Ascending aorta (tissue), 2 donors: ENCODE measurements at regions of chr12 and their contacts with region 1.

Region 1: DNA sequence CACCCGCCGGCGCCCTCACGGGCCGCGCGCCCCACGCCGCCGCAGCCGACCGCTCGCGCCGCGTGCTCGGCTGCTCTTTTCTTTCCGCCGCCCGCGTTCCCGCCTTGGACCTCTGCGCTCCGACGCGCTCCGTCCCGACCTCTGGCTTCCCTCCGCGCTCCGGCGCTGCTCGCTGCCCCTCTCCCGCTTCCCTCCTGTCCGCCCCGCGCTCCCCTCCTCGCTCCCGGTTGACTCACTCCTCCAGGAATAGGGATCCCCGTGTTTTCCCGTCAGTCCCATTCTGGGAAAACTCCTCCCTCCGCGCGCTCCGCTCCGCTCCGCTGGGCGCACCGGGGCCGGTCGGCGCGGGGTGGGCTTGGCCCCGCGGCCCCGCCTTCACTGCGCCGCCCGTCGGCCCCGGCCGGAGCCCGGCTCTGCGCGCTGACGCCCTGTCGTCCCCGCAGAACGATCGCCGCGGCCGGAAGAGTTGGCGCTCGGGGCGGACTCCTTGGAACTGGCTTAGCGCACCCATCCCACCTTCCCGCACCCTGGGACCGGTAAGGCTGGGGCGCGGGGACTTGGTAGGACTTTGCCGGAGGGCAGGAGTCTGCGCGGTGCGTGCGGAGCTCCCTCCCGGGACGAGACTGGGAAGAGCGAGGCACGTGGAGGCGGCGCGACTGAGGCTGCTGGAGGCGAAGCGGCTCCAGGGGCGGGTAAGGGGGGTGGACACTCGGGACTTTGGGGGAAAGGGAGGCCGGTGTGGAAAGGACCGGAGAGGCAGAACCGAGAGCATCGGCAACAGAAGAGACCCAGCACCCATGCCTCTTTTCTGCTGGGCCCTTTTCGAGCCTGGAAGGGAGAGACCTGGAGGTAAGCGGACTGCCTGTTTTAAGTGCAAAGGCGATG is 550 bp downstream of the TEAD4 start:
- DNase-seq: peak in 1 of 2 donors; percentile 83
- H3K4me3 ChIP-seq: peak overlapping the region; percentile 71 to 75
- H3K27ac ChIP-seq: peak overlapping the region; percentile 93 to 95
- H3K4me1 ChIP-seq: peaks cover 5 to 16% of the 10 kb centered on the region in 2 donors
- H3K27me3 ChIP-seq: no peaks in the 10 kb centered on the region
- CTCF ChIP-seq: no peak

Region 2: DNA sequence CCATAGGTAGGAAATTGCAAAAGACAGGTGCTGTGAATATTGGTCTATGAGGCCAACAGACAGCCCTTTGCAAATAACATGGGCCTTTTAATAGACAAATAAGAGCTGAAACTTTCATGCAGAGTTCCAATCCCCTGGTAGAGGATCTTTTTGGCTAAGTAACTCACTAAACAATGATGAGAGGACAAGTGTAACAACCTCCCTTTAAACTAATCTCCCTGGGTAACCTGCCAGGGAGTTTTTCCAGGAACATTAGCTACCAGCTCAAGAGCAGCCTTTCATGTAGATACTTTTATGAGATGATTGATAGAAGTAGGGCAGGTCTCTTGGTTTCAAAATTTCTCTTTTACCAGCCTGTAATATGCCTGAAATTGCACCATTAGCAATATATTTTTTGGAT is 920.7 kb before region 1 on chr12:
- intact Hi-C with region 1: no loop called
- DNase-seq: no peak
- H3K4me3 ChIP-seq: no peak overlapping the region
- H3K27ac ChIP-seq: no peak overlapping the region
- H3K4me1 ChIP-seq: peaks cover 3 to 11% of the 10 kb centered on the region in 2 donors
- H3K27me3 ChIP-seq: no peaks in the 10 kb centered on the region
- CTCF ChIP-seq: no peak

Region 3: DNA sequence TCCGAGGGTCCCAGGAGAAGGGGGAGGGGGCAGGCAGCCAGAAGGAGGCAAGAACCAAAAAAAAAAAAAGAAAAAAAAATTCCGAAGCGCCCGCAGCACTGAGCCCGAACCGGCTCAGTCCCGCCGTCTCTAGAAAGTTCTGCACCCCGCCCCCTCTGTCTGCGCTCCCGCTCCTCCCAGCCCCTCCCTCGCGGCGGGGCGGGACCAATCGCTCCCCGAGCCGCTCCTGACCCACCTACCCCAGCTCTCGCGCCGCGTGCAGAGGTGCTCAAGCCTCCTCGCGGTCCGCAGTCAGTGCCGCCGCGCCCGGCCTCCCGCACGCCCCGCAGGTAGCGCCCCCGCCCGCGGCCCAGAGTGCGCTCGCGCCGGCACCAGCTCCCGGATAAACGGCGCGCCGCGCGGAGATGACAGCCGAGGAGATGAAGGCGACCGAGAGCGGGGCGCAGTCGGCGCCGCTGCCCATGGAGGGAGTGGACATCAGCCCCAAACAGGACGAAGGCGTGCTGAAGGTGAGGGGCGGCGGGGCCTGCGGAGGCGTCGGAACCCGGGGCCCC is 164.9 kb before region 1 on chr12 and contains the start of gene FKBP4:
- intact Hi-C with region 1: no loop called
- DNase-seq: peak; percentile 65 to 95
- H3K4me3 ChIP-seq: peak within 1 kb of the TSS; percentile 82 to 84
- H3K27ac ChIP-seq: peak within 1 kb of the TSS; percentile 64 to 88
- H3K4me1 ChIP-seq: peaks cover 13 to 19% of the 10 kb centered on the region in 2 donors
- H3K27me3 ChIP-seq: no peaks in the 10 kb centered on the region
- CTCF ChIP-seq: no peak
- total RNA-seq, gene FKBP4: 36.3 TPM

Region 4: GRCh38 chr12:2877047-2877952 is 82.4 kb before region 1 on chr12 and contains the starts of genes FOXM1 and RHNO1:
- intact Hi-C with region 1: loop called (anchors 5 kb)
- DNase-seq: peak; percentile 46 to 91
- H3K4me3 ChIP-seq: peak within 1 kb of the TSS; percentile 94 to 99
- H3K27ac ChIP-seq: peak within 1 kb of the TSS; percentile 91 to 96
- H3K4me1 ChIP-seq: peaks cover 0 to 16% of the 10 kb centered on the region in 2 donors
- H3K27me3 ChIP-seq: no peaks in the 10 kb centered on the region
- CTCF ChIP-seq: peak in 2 of 3 experiments; percentile 23 to 28
- total RNA-seq, gene FOXM1: not detected
- total RNA-seq, gene RHNO1: 2.9 TPM

Region 5: GRCh38 chr12:2988494-2988893 is 28.7 kb after region 1 on chr12:
- intact Hi-C with region 1: no loop called
- DNase-seq: no peak
- H3K4me3 ChIP-seq: no peak overlapping the region
- H3K27ac ChIP-seq: no peak overlapping the region
- H3K4me1 ChIP-seq: no peaks in the 10 kb centered on the region
- H3K27me3 ChIP-seq: no peaks in the 10 kb centered on the region
- CTCF ChIP-seq: no peak

Region 6: GRCh38 chr12:3041558-3042164 is 81.9 kb after region 1 on chr12:
- intact Hi-C with region 1: loop called (anchors 5 kb)
- DNase-seq: peak in 1 of 2 donors; percentile 77
- H3K4me3 ChIP-seq: no peak overlapping the region
- H3K27ac ChIP-seq: no peak overlapping the region
- H3K4me1 ChIP-seq: peaks cover 0 to 4% of the 10 kb centered on the region in 2 donors
- H3K27me3 ChIP-seq: no peaks in the 10 kb centered on the region
- CTCF ChIP-seq: peak; percentile 53 to 73 (median 64)